Lower leg skin (tissue), 4 donors: ENCODE measurements at regions of chr3 and their contacts with region 1.

Region 1: GRCh38 chr3:15629860-15630597 is 28.5 kb downstream of the BTD start:
- DNase-seq: peak in 1 of 2 donors; percentile 70
- H3K4me3 ChIP-seq: no peak overlapping the region
- CTCF ChIP-seq: peak in 1 of 3 donors; percentile 56
- POLR2A ChIP-seq: no peak

Region 2: DNA sequence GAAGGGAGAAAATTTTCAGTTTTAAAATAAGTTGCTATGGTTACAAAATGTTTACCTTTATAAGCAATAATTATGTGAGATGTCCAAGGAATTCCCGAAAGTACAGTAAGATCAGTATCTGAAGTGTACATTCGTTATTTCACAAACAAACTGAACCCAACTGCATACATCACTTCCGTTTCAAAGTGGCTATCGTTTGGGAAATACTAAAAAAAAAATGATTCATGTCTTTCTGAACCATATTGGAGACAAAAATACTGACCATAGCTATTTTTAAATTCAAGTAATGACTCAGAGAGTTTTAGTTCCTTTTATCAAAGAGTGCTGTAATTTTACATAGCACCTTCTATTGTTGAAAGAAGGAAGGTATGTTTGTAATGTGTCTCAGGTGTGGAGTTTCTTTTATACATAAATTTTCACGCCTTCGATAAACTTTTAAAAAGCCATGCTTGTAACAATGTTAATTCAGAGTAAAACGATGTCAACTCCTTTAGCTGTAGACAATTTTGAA is 175.8 kb after region 1 on chr3:
- intact Hi-C with region 1: loop called (anchors 5 kb)
- DNase-seq: no peak
- H3K4me3 ChIP-seq: no peak overlapping the region
- CTCF ChIP-seq: no peak
- POLR2A ChIP-seq: no peak

Region 3: GRCh38 chr3:16300881-16301359 is 670.9 kb after region 1 on chr3:
- intact Hi-C with region 1: no loop called
- DNase-seq: no peak
- H3K4me3 ChIP-seq: no peak overlapping the region
- CTCF ChIP-seq: no peak
- POLR2A ChIP-seq: no peak